ENCODE measurements at regions of chr14 and their contacts with region 1.

Region 1: GRCh38 chr14:53295985-53296582 is 143.0 kb upstream of the DDHD1 start:
- DNase-seq: peak in 6 of 9 donors; percentile 4 to 52 (median 44)
- ATAC-seq: no peak
- H3K4me3 ChIP-seq: no peak overlapping the region
- H3K4me3 Mint-ChIP-seq: no peak overlapping the region
- H3K27ac ChIP-seq: no peak overlapping the region
- H3K27ac Mint-ChIP-seq: no peak overlapping the region
- H3K4me1 ChIP-seq: no peaks in the 10 kb centered on the region
- H3K4me1 Mint-ChIP-seq: peaks cover 0 to 2% (median 0%) of the 10 kb centered on the region in 7 donors
- H3K27me3 ChIP-seq: no peaks in the 10 kb centered on the region
- H3K27me3 Mint-ChIP-seq: peaks cover 0 to 3% (median 0%) of the 10 kb centered on the region in 5 donors

Region 2: GRCh38 chr14:53226553-53226952 is 69.5 kb before region 1 on chr14:
- CTCF ChIA-PET with region 1: no interaction called
- POLR2A ChIA-PET with region 1: no interaction called
- intact Hi-C with region 1: no loop called
- DNase-seq: no peak
- ATAC-seq: no peak
- H3K4me3 ChIP-seq: no peak overlapping the region
- H3K4me3 Mint-ChIP-seq: no peak overlapping the region
- H3K27ac ChIP-seq: no peak overlapping the region
- H3K27ac Mint-ChIP-seq: no peak overlapping the region
- H3K4me1 ChIP-seq: no peaks in the 10 kb centered on the region
- H3K4me1 Mint-ChIP-seq: peaks cover 0 to 8% (median 2%) of the 10 kb centered on the region in 7 donors
- H3K27me3 ChIP-seq: no peaks in the 10 kb centered on the region
- H3K27me3 Mint-ChIP-seq: no peaks in the 10 kb centered on the region

Region 3: DNA sequence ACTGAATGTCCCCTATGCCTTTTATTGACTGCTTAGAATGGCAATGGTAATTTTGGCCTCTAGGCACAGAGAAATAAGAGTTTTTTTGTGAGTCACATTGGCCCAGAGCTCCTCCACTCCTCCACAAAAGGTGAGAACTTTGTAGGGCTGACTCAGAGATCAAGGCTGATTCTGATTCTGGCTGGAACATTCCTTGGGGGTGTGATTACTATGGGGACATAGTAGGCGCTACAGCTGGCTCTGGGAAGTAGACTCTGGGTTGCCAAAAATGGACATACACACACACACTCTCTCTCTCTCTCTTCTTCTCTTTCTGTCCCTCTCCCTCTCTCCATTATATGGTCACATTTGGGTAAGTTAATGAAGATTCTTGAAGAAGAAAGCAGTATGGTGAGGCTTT is 31.6 kb after region 1 on chr14:
- CTCF ChIA-PET with region 1: no interaction called
- POLR2A ChIA-PET with region 1: no interaction called
- intact Hi-C with region 1: no loop called
- DNase-seq: no peak
- ATAC-seq: no peak
- H3K4me3 ChIP-seq: no peak overlapping the region
- H3K4me3 Mint-ChIP-seq: no peak overlapping the region
- H3K27ac ChIP-seq: no peak overlapping the region
- H3K27ac Mint-ChIP-seq: no peak overlapping the region
- H3K4me1 ChIP-seq: no peaks in the 10 kb centered on the region
- H3K4me1 Mint-ChIP-seq: no peaks in the 10 kb centered on the region
- H3K27me3 ChIP-seq: no peaks in the 10 kb centered on the region
- H3K27me3 Mint-ChIP-seq: peaks cover 0 to 2% (median 0%) of the 10 kb centered on the region in 5 donors

Region 4: DNA sequence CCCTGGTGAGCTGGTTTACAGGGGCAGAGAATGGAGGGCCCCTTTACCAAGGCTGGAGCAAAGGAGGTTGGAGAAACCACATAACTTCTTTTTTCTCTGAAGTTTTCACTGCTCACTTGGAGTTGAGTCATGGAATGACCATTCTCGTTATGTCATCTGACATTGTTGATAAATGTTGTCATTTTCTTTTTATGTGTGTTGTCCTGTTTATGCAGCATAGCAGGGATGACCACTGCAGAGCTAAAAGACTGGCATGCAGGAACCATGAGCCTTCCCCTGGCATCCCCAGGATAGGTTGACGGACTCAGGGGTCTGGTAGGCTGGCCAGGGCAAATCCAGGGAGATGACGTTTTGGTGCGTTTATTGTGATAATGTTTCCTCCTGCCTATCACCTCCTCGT is 113.9 kb after region 1 on chr14:
- CTCF ChIA-PET with region 1: no interaction called
- POLR2A ChIA-PET with region 1: no interaction called
- intact Hi-C with region 1: no loop called
- DNase-seq: no peak
- ATAC-seq: no peak
- H3K4me3 ChIP-seq: no peak overlapping the region
- H3K4me3 Mint-ChIP-seq: no peak overlapping the region
- H3K27ac ChIP-seq: no peak overlapping the region
- H3K27ac Mint-ChIP-seq: no peak overlapping the region
- H3K4me1 ChIP-seq: no peaks in the 10 kb centered on the region
- H3K4me1 Mint-ChIP-seq: no peaks in the 10 kb centered on the region
- H3K27me3 ChIP-seq: no peaks in the 10 kb centered on the region
- H3K27me3 Mint-ChIP-seq: no peaks in the 10 kb centered on the region

Region 5: DNA sequence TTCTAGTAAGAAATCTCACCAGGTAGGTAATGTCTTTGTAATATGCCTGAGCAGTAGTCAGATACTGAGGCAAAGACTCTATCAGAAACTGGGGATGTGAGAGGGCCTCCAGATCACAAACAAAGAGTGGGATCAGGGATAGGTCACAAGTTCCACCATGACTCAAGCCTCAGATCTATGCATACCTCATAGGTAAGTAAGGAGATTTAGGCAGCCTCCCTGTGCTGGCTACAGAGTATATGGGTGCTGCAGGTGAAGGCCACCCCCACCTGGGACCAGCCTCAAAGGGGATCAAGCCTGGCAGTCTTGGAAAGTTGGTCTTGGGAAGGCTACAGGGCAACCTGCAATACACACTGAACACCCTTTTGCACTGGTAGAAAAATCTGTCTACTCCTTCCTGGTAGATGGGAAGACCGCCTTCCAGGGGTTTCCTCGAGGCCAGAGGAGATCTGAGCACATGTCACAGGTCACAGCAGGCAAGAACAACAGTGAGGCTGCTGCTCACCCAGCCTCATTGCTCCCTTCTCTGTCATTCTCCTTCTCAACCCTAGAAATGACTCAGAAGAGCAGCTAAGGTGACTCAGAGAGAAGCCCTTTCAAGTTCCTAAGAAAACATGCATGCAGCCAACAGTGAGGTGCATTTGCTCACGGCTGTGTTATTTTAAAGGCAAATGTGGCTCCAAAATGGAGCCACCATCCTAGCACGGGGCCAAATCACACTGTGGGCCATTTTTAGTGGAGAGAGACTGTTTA is 957.3 kb after region 1 on chr14:
- CTCF ChIA-PET with region 1: no interaction called
- POLR2A ChIA-PET with region 1: no interaction called
- intact Hi-C with region 1: loop called in 1 of 2 experiments (anchors 5 kb)
- DNase-seq: no peak
- ATAC-seq: no peak
- H3K4me3 ChIP-seq: no peak overlapping the region
- H3K4me3 Mint-ChIP-seq: no peak overlapping the region
- H3K27ac ChIP-seq: no peak overlapping the region
- H3K27ac Mint-ChIP-seq: no peak overlapping the region
- H3K4me1 ChIP-seq: no peaks in the 10 kb centered on the region
- H3K4me1 Mint-ChIP-seq: peaks cover 0 to 5% (median 0%) of the 10 kb centered on the region in 7 donors
- H3K27me3 ChIP-seq: no peaks in the 10 kb centered on the region
- H3K27me3 Mint-ChIP-seq: peaks cover 9 to 27% (median 20%) of the 10 kb centered on the region in 5 donors

Region 6: DNA sequence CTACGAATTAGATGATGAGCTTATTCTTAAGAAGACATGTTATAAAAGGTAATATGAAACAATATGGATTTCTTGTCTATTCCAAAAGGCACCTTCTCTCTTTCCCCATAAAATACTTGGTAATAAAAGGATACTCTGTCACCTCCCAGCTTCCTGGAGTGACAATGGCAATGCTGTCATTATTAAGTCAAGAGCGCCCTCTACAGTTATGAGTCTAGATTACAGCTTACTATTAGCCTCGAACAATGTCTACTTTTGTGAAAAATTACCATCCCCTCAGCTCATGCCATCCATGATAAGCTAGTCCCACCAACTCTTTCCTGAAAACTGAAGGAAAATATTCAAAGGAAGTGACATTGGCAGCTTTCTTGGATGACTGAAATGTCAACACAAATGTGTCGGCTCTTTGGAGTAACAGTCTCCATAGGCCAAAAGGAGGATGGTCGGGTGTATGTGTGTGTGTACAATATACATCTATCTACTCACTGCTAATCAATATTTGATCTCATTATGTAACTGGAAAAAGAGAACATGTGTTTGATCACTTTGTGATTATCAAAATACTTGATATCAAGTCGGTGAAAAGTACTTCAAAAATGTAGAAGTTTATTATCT is 1052.0 kb after region 1 on chr14:
- CTCF ChIA-PET with region 1: no interaction called
- POLR2A ChIA-PET with region 1: no interaction called
- intact Hi-C with region 1: loop called in 1 of 2 experiments (anchors 2 kb)
- DNase-seq: peak in 3 of 9 donors; percentile 9 to 33 (median 13)
- ATAC-seq: no peak
- H3K4me3 ChIP-seq: no peak overlapping the region
- H3K4me3 Mint-ChIP-seq: no peak overlapping the region
- H3K27ac ChIP-seq: no peak overlapping the region
- H3K27ac Mint-ChIP-seq: no peak overlapping the region
- H3K4me1 ChIP-seq: no peaks in the 10 kb centered on the region
- H3K4me1 Mint-ChIP-seq: peaks cover 0 to 10% (median 5%) of the 10 kb centered on the region in 7 donors
- H3K27me3 ChIP-seq: no peaks in the 10 kb centered on the region
- H3K27me3 Mint-ChIP-seq: peaks cover 9 to 30% (median 15%) of the 10 kb centered on the region in 5 donors

Measured in naive thymus-derived CD4-positive, alpha-beta T cell (primary cell).